ENCODE measurements at regions of chr11 and their contacts with region 1.

Region 1: DNA sequence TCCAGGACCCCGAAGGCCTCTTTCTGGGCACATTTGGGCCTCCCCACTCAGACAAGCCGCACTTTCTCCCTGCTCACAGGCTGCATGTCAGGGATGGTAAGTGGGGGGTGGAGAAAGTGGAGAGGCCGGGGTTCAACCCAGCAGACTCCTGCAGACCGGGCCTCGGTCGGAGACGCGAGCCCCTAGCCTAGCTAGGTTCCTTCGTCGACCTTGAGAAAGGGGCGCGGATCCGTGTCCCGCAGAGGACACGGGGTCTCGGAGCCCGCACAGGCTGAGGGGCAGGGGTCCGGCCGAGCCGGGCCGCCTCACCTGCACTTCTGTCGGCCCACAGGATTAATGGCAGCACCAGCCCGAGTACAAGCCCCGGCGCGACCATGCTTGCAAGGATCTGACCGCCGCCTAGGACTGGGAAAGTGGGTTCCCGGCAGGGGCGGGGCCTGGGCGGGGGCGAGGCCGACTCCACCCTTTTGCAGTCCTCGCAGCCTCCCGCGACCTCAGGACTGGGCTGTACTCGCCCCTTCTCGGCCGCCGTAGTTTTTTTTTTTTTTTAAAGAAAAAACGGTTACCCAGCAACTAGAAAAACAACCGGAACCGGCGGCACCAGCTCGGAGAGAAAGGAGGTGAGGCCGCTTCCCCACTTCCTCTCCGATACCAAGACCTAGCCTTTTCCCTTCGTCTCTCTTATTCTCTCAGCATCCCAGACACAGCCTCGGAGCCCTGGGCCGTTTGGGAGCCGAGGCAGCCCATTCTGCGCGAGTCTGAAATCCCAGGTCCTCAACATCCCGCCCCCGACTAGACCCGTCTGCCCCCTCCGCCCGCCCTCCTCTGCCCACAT is at the starts of genes SIAE and SPA17:
- DNase-seq: peak; percentile 72 to 98 (median 90)

Region 2: GRCh38 chr11:123391646-123392348 is 1281.8 kb before region 1 on chr11:
- intact Hi-C with region 1: no loop called
- DNase-seq: no peak

Region 3: DNA sequence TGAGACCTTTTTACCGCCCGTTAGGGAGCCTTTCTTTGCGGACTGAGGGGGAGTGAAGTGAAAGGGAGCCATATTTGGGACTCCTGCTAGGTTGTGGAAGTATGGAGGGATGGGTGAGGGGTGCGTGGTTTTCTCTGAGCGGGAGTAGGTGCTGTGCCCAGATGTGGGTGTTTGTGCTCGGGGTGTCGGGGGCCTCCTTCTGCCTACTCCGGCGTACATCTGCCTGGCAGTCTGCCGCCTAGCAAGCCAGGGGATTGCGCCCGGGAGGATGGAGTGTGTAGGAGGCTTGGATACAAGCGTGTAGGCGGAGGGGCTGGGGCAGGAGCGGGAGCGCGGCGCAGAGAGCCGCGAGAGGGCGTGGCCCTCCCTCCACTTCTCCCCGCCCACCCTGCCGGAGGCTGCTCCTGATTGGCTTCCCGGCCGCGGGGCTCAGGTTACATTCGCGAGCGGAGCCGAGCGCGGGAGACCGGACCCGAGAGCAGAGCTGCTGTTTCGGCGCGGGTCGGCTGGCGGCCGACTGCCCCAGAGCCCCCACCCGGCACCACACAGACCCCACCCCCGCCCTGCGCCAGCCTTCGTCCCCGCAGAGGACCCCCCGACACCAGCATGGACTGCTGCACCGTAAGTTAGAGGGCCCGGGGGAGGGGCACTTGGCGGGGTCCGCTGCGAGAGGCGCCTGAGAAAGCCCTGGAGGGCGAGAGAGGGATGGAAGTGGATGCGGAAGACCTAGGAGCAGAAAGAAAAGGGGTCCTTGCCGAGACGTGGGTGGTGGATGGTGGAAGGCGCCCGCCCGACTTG is 66.1 kb after region 1 on chr11 and contains the start of gene NRGN:
- intact Hi-C with region 1: loop called (anchors 5 kb)
- DNase-seq: peak; percentile 64 to 98 (median 89)